Pancreas (tissue), 10 donors: ENCODE measurements at regions of chr2 and their contacts with region 1.

Region 1: DNA sequence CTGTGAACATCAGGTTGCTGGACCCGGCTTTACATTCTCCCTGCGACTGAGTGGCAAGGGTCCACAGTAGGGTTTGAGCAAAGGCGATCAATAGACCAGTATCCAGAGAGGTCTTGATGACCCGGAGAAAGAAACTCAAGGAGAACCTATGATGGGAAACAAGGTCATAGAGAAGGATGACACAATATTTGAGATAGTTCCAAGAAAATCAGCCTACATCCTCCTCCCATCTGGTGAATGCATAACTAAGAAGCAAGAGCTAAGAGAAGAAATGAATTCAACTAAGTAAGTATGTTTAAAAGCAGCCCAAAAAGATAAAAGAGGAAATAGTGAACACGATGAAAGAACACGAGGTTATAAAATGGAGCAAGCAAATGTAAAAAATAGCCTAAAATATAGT is 166.3 kb downstream of the CD8B2 start:
- DNase-seq: no peak
- ATAC-seq: no peak
- H3K4me3 ChIP-seq: no peak overlapping the region
- H3K27ac ChIP-seq: no peak overlapping the region
- H3K4me1 ChIP-seq: no peaks in the 10 kb centered on the region
- H3K27me3 ChIP-seq: peaks cover 0 to 8% (median 0%) of the 10 kb centered on the region in 4 donors
- CTCF ChIP-seq: no peak

Region 2: DNA sequence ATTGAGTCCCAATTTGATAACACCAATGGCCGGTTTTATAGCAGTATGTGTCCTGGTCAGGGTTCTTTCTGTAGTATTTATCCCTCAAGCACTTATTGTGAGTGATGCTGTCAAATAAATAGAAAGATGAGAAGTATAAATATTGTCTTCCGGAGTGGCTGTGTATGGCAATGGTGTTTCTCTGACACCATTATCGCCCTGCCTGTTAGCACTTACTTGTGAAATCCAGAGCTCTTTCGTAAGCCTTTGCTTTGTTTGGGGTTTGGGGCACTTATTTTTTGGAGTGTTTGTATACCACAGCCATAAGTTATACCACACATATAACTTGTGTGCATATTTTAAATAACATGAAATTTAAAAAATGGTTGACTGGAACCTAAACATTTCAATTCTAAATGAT is 137.0 kb before region 1 on chr2:
- intact Hi-C with region 1: no loop called
- DNase-seq: no peak
- ATAC-seq: no peak
- H3K4me3 ChIP-seq: no peak overlapping the region
- H3K27ac ChIP-seq: no peak overlapping the region
- H3K4me1 ChIP-seq: no peaks in the 10 kb centered on the region
- H3K27me3 ChIP-seq: no peaks in the 10 kb centered on the region
- CTCF ChIP-seq: no peak

Region 3: DNA sequence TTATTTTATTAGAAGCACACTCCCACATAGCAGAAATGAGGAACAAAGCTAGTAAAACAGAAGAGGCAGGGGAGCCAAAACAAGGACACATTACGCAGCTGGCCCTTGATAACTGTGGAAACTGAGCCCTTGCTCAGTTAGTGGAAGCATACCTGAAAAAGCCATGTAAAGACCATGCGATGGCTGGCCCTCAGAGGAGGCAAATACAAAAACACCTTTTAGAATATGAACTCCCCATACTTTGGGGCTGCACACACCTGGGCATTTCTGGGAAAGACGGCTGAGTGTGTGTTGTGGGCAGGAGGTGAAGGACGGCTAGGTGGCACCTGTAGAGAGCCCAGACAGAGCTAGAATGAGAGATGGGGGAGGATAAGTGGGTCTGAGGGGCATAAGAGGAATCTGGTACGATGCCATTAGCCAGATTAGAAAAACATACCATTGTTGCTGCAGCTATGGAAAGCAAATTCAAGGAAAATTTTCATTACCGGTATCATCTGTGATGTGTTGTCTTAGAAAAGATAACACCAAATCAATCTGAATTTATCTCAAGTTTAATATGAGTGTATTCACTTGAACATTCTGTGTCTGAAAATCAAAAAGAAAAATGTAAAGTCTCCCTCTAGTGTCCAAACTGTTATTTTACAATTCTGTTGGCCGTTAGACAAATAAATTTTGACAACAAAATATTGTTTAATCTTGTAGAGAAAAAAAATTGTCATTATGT is 1541.1 kb after region 1 on chr2:
- intact Hi-C with region 1: loop called in 1 of 3 experiments (anchors 10 kb)
- DNase-seq: no peak
- ATAC-seq: no peak
- H3K4me3 ChIP-seq: no peak overlapping the region
- H3K27ac ChIP-seq: no peak overlapping the region
- H3K4me1 ChIP-seq: no peaks in the 10 kb centered on the region
- H3K27me3 ChIP-seq: peaks cover 0 to 2% (median 0%) of the 10 kb centered on the region in 4 donors
- CTCF ChIP-seq: peak in 3 of 4 donors; percentile 20 to 29 (median 29)